IMR-90 (cell line): ENCODE measurements at regions of chr6 and their contacts with region 1.

Region 1: DNA sequence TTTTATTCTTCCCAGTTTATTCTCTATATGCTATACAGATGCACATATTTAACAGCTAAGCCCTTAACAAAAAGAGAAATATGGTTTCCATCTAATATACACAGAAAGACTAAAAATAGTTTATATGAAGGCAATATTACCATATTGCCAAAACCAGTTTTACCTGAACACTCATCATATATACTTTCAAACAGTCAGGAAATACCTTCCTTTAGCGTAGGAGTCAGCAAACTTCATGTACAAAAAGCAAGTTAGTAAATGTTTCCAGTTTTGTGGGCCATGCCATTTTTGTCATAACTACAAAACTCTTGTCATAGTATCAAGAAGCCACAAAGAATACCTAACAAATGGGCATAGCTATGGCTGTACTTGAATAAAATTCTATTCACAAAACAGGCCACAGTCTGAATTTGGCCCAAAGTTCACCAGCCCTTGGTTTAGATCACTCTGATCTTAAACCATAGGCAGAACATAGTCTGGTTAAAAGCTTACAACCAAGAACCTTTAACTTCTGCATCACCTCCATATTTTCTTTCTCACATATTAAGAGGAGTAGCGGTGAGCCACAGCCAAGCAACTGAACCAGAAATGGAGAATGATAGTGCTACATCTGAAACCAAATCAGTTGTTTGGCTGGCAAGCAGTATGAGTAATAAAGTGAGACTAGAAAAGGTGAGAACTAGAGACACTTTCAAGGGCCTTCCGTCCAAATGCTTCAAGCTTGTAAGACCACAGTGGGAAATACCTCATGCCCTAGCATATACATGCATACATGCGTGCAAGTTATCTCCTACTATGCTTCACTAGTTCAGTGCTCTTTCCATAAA is 116.6 kb downstream of the PTPRK start:
- DNase-seq: no peak
- ATAC-seq: no peak
- H3K4me3 ChIP-seq: no peak overlapping the region
- H3K27ac ChIP-seq: no peak overlapping the region
- H3K4me1 ChIP-seq: no peaks in the 10 kb centered on the region; the same call in 1 of the 2 replicates
- H3K27me3 ChIP-seq: no peaks in the 10 kb centered on the region
- CTCF ChIP-seq: no peak
- POLR2A ChIP-seq: no peak
- RAD21 ChIP-seq: no peak

Region 2: GRCh38 chr6:128327890-128328289 is 75.9 kb before region 1 on chr6:
- CTCF ChIA-PET with region 1: no interaction called
- POLR2A ChIA-PET with region 1: no interaction called
- dilution Hi-C with region 1: no loop called
- in situ Hi-C with region 1: no loop called
- intact Hi-C with region 1: no loop called
- DNase-seq: peak; percentile 16
- ATAC-seq: no peak
- H3K4me3 ChIP-seq: no peak overlapping the region
- H3K27ac ChIP-seq: no peak overlapping the region
- H3K4me1 ChIP-seq: no peaks in the 10 kb centered on the region
- H3K27me3 ChIP-seq: no peaks in the 10 kb centered on the region
- CTCF ChIP-seq: peak; percentile 42
- POLR2A ChIP-seq: no peak
- RAD21 ChIP-seq: peak; percentile 37; the same call in 1 of the 2 replicates

Region 3: GRCh38 chr6:128389820-128390534 is 13.9 kb before region 1 on chr6:
- CTCF ChIA-PET with region 1: no interaction called
- POLR2A ChIA-PET with region 1: no interaction called
- dilution Hi-C with region 1: no loop called
- in situ Hi-C with region 1: no loop called
- intact Hi-C with region 1: loop called (anchors 2 kb)
- DNase-seq: no peak
- ATAC-seq: peak; percentile 51
- H3K4me3 ChIP-seq: no peak overlapping the region
- H3K27ac ChIP-seq: no peak overlapping the region
- H3K4me1 ChIP-seq: no peaks in the 10 kb centered on the region
- H3K27me3 ChIP-seq: no peaks in the 10 kb centered on the region
- CTCF ChIP-seq: no peak
- POLR2A ChIP-seq: no peak
- RAD21 ChIP-seq: no peak